ENCODE measurements at regions of chr7 and their contacts with region 1.

Region 1: GRCh38 chr7:101660495-101660894 is 31.4 kb upstream of the MYL10 start:
- DNase-seq: no peak
- H3K4me3 ChIP-seq: no peak overlapping the region
- H3K4me3 Mint-ChIP-seq: no peak overlapping the region
- H3K27ac Mint-ChIP-seq: no peak overlapping the region
- H3K4me1 ChIP-seq: peaks cover 13% of the 10 kb centered on the region; the same call in 1 of the 2 replicates
- H3K4me1 Mint-ChIP-seq: peaks cover 13% of the 10 kb centered on the region
- H3K27me3 ChIP-seq: no peaks in the 10 kb centered on the region
- H3K27me3 Mint-ChIP-seq: no peaks in the 10 kb centered on the region
- CTCF ChIP-seq: no peak

Region 2: GRCh38 chr7:101792051-101792681 is 131.7 kb after region 1 on chr7:
- CTCF ChIA-PET with region 1: interaction called, 11 read pairs
- POLR2A ChIA-PET with region 1: no interaction called
- intact Hi-C with region 1: no loop called
- DNase-seq: no peak
- H3K4me3 ChIP-seq: no peak overlapping the region
- H3K4me3 Mint-ChIP-seq: no peak overlapping the region
- H3K27ac Mint-ChIP-seq: no peak overlapping the region
- H3K4me1 ChIP-seq: no peaks in the 10 kb centered on the region
- H3K4me1 Mint-ChIP-seq: peaks cover 5% of the 10 kb centered on the region
- H3K27me3 ChIP-seq: no peaks in the 10 kb centered on the region
- H3K27me3 Mint-ChIP-seq: no peaks in the 10 kb centered on the region
- CTCF ChIP-seq: no peak

Region 3: GRCh38 chr7:101828301-101829020 is 168.0 kb after region 1 on chr7:
- CTCF ChIA-PET with region 1: no interaction called
- POLR2A ChIA-PET with region 1: no interaction called
- intact Hi-C with region 1: no loop called
- DNase-seq: no peak
- H3K4me3 ChIP-seq: no peak overlapping the region
- H3K4me3 Mint-ChIP-seq: no peak overlapping the region
- H3K27ac Mint-ChIP-seq: no peak overlapping the region
- H3K4me1 ChIP-seq: no peaks in the 10 kb centered on the region
- H3K4me1 Mint-ChIP-seq: peaks cover 12% of the 10 kb centered on the region
- H3K27me3 ChIP-seq: no peaks in the 10 kb centered on the region
- H3K27me3 Mint-ChIP-seq: no peaks in the 10 kb centered on the region
- CTCF ChIP-seq: no peak